ENCODE measurements at regions of chr3 and their contacts with region 1.

Region 1: GRCh38 chr3:40452876-40453730 is 4.0 kb upstream of the RPL14 start:
- DNase-seq: peak; percentile 98
- ATAC-seq: peak; percentile 94
- H3K4me3 Mint-ChIP-seq: peak overlapping the region; percentile 96
- H3K27ac Mint-ChIP-seq: peak overlapping the region; percentile 96
- H3K4me1 Mint-ChIP-seq: peaks cover 30% of the 10 kb centered on the region
- H3K27me3 Mint-ChIP-seq: no peaks in the 10 kb centered on the region

Region 2: GRCh38 chr3:39406368-39407258 is 1046.5 kb before region 1 on chr3 and contains the start of gene RPSA:
- CTCF ChIA-PET with region 1: no interaction called
- POLR2A ChIA-PET with region 1: no interaction called
- intact Hi-C with region 1: loop called (anchors 2 to 5 kb)
- DNase-seq: peak; percentile 98
- ATAC-seq: peak; percentile 93
- H3K4me3 Mint-ChIP-seq: peak within 1 kb of the TSS; percentile 98
- H3K27ac Mint-ChIP-seq: peak within 1 kb of the TSS; percentile 98
- H3K4me1 Mint-ChIP-seq: peaks cover 39% of the 10 kb centered on the region
- H3K27me3 Mint-ChIP-seq: no peaks in the 10 kb centered on the region
- total RNA-seq, gene RPSA: 2,498 to 3,023 TPM

Region 3: DNA sequence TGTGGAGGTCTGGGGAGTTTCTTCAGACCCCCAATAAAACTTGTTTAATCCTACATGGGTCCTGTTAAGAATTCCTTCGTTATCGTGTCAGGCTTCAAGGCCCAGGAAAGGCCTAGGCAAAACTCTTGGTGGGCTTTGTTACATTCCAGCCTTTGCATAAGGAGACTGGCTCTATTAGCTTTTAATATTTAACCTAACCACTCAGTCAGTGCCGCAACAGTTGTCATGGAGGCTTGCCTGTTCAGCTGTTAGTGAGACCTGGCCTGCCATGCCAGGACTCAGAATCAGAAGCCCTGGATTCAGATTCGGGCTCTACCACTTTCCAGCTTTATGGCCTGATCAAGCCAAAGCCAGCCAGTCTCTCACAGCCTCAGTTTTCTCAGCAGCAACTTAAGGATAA is 124.0 kb before region 1 on chr3:
- CTCF ChIA-PET with region 1: interaction called, 6 read pairs
- POLR2A ChIA-PET with region 1: no interaction called
- intact Hi-C with region 1: loop called (anchors 5 kb)
- DNase-seq: no peak
- ATAC-seq: no peak
- H3K4me3 Mint-ChIP-seq: no peak overlapping the region
- H3K27ac Mint-ChIP-seq: no peak overlapping the region
- H3K4me1 Mint-ChIP-seq: peaks cover 3% of the 10 kb centered on the region
- H3K27me3 Mint-ChIP-seq: no peaks in the 10 kb centered on the region

Region 4: DNA sequence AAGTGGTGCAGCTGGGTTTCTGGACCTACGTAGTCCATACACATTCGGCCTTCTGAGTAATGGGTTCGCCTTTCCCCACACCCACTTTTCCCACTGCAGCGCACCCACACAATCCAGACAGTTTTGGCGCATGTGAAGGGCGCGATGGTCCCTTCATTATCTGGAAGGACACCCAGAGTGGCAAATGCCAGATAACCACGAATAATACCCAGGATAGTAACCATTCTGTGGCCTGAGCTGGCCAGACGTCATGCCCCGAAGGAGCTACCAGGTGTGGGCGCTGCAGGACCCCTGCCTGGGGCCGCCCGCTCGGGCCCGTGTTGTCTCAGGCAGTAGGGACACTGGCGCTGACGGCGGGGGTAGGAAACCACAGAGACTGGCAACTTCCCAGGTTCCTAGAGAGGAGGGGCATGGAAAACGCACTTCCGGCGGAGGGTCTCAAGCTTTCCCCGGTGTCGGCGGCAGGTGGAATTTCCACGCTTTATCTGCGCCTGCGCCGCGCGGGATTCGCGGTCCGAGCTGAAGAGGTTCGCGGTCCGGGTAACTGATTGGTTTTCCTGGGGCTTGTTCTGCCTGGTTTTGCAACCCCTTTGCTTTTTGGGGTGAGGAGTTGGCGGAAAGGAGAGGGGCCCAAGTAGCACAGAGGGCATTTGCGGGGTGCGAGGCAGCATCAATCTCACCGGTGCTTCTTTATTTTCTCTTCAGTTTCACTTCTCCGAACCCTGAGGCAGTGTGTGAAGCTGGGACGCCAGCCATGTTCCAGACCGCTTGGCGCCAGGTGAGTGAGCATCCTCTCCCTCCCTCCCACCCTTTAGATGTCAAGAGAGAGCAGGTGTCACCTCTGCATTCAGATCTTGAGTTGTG is 52.7 kb after region 1 on chr3 and contains the start of gene ZNF620:
- CTCF ChIA-PET with region 1: interaction called, 5 read pairs
- POLR2A ChIA-PET with region 1: no interaction called
- intact Hi-C with region 1: loop called in 1 of 2 experiments (anchors 2 kb)
- DNase-seq: peak; percentile 59
- ATAC-seq: peak; percentile 67
- H3K4me3 Mint-ChIP-seq: peak within 1 kb of the TSS; percentile 86
- H3K27ac Mint-ChIP-seq: peak within 1 kb of the TSS; percentile 92
- H3K4me1 Mint-ChIP-seq: peaks cover 29% of the 10 kb centered on the region
- H3K27me3 Mint-ChIP-seq: no peaks in the 10 kb centered on the region
- total RNA-seq, gene ZNF620: 3.8 to 3.9 TPM

Region 5: DNA sequence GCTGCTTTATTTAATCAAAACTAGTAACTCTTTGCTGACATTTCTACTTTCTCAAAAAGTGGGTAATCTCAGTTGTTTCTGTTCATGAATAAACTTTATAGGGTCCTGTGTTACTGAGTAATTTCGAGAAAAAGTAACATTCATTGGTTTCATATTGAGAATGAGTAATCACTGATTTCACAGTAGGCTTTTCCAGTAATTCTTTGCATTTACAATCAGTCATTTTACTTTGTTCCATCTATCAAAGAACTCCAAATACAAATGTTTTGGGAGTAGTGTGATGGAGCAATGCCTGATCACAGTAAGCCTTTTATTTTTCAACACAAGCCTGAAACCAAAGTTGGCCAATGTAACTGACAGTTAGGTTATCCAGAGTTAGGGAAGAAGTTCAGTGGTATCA is 1155.2 kb after region 1 on chr3:
- CTCF ChIA-PET with region 1: no interaction called
- POLR2A ChIA-PET with region 1: no interaction called
- intact Hi-C with region 1: loop called in 1 of 2 experiments (anchors 5 kb)
- DNase-seq: no peak
- ATAC-seq: peak; percentile 84
- H3K4me3 Mint-ChIP-seq: peak overlapping the region; percentile 23
- H3K27ac Mint-ChIP-seq: peak overlapping the region; percentile 73
- H3K4me1 Mint-ChIP-seq: peaks cover 18% of the 10 kb centered on the region
- H3K27me3 Mint-ChIP-seq: no peaks in the 10 kb centered on the region